Motor neuron (in vitro differentiated cells): ENCODE measurements at regions of chr4 and their contacts with region 1.

Region 1: GRCh38 chr4:156968479-156968984 is 3.1 kb downstream of the PDGFC start:
- ATAC-seq: peak in 2 of 8 experiments; percentile 5
- H3K4me3 ChIP-seq: peak overlapping the region in 4 of 5 donors; percentile 55 to 96 (median 76)
- H3K27ac ChIP-seq: no peak overlapping the region
- H3K4me1 ChIP-seq: peaks cover 10 to 14% of the 10 kb centered on the region in 2 donors

Region 2: GRCh38 chr4:156677131-156677531 is 291.4 kb before region 1 on chr4:
- in situ Hi-C with region 1: loop called in 1 of 9 experiments (anchors 25 kb)
- ATAC-seq: peak in 4 of 8 experiments; percentile 40 to 86 (median 83)
- H3K4me3 ChIP-seq: no peak overlapping the region
- H3K27ac ChIP-seq: no peak overlapping the region
- H3K4me1 ChIP-seq: peaks cover 0 to 2% of the 10 kb centered on the region in 2 donors

Region 3: DNA sequence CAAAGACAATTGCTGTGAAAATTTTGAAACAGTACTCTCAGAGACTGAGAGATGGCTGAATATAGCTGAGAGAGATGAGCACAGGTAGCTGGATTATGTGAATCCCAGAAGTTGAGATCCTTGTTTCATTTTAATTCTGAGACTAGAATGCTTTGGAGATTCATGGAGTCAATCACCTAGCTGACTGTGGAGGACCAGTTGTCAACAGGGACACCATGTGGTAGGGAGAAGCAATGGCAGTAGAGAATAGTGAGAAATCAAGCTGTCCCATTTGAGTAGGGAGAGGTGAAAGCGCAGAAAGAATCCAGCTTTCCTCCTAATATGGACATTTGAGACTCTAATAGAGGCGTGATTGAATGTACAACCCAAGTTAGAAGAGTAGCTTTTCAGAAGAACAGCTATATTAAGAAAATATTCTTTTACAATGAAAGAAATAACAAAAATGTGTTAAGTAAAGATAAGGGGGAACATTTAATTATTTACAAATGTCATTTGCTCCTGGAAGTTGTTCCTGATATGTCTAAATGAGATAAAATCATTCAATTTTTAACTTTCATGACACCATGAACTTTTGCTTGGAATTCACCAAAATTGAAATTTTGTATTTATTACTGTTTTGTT is 77.1 kb after region 1 on chr4:
- in situ Hi-C with region 1: loop called in 1 of 9 experiments (anchors 10 kb)
- ATAC-seq: peak in 6 of 8 experiments; percentile 42 to 94 (median 84)
- H3K4me3 ChIP-seq: no peak overlapping the region
- H3K27ac ChIP-seq: no peak overlapping the region
- H3K4me1 ChIP-seq: no peaks in the 10 kb centered on the region